Activated CD8-positive, alpha-beta T cell treated with anti-CD3 and anti-CD28 coated beads for 36 hours (primary cell): ENCODE measurements at regions of chr2 and their contacts with region 1.

Region 1: GRCh38 chr2:24075915-24076848 is at the start of gene SF3B6:
- DNase-seq: peak; percentile 100
- ATAC-seq: peak; percentile 92
- H3K4me3 Mint-ChIP-seq: peak within 1 kb of the TSS; percentile 93
- H3K27ac Mint-ChIP-seq: peak within 1 kb of the TSS; percentile 98
- H3K4me1 Mint-ChIP-seq: peaks cover 36% of the 10 kb centered on the region
- H3K27me3 Mint-ChIP-seq: no peaks in the 10 kb centered on the region
- CTCF ChIP-seq: no peak
- total RNA-seq, gene SF3B6: 141 to 144 TPM

Region 2: DNA sequence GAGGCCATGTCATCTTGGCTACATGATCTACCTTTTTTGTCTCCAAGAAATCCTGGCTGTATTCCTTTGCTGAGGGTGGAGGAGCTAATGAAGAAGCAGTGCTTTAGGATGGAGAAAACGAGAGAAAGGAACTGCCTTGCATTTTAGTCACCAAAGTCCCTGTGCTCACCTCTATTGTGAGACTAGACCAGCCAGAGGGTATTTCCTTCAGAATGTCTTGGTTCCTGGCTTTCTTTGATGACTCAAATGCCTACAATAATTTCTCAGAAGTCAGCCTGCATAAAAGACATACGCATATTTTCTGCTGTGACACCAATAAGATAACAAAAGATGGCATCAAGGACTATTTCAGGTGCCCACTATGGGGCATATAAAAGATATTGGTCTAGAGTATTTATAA is 10.8 kb before region 1 on chr2:
- CTCF ChIA-PET with region 1: interaction called, 6 read pairs
- POLR2A ChIA-PET with region 1: interaction called, 11 read pairs
- intact Hi-C with region 1: no loop called
- DNase-seq: no peak
- ATAC-seq: peak; percentile 37
- H3K4me3 Mint-ChIP-seq: no peak overlapping the region
- H3K27ac Mint-ChIP-seq: no peak overlapping the region
- H3K4me1 Mint-ChIP-seq: peaks cover 7% of the 10 kb centered on the region
- H3K27me3 Mint-ChIP-seq: no peaks in the 10 kb centered on the region
- CTCF ChIP-seq: no peak